ENCODE measurements at regions of chr2 and their contacts with region 1.

Region 1: GRCh38 chr2:17413036-17413435 is 105.2 kb downstream of the RAD51AP2 start:
- DNase-seq: no peak
- ATAC-seq: no peak
- H3K4me3 ChIP-seq: no peak overlapping the region
- H3K4me3 Mint-ChIP-seq: no peak overlapping the region
- H3K27ac ChIP-seq: no peak overlapping the region
- H3K27ac Mint-ChIP-seq: no peak overlapping the region
- H3K4me1 ChIP-seq: no peaks in the 10 kb centered on the region
- H3K4me1 Mint-ChIP-seq: no peaks in the 10 kb centered on the region
- H3K27me3 ChIP-seq: no peaks in the 10 kb centered on the region
- H3K27me3 Mint-ChIP-seq: no peaks in the 10 kb centered on the region
- CTCF ChIP-seq: no peak

Region 2: GRCh38 chr2:17401096-17401495 is 11.9 kb before region 1 on chr2:
- intact Hi-C with region 1: loop called (anchors 1 kb)
- DNase-seq: no peak
- ATAC-seq: no peak
- H3K4me3 ChIP-seq: no peak overlapping the region
- H3K4me3 Mint-ChIP-seq: no peak overlapping the region
- H3K27ac ChIP-seq: no peak overlapping the region
- H3K27ac Mint-ChIP-seq: no peak overlapping the region
- H3K4me1 ChIP-seq: no peaks in the 10 kb centered on the region
- H3K4me1 Mint-ChIP-seq: no peaks in the 10 kb centered on the region
- H3K27me3 ChIP-seq: no peaks in the 10 kb centered on the region
- H3K27me3 Mint-ChIP-seq: no peaks in the 10 kb centered on the region
- CTCF ChIP-seq: no peak